Lower leg skin (tissue), 4 donors: ENCODE measurements at regions of chr16 and their contacts with region 1.

Region 1: DNA sequence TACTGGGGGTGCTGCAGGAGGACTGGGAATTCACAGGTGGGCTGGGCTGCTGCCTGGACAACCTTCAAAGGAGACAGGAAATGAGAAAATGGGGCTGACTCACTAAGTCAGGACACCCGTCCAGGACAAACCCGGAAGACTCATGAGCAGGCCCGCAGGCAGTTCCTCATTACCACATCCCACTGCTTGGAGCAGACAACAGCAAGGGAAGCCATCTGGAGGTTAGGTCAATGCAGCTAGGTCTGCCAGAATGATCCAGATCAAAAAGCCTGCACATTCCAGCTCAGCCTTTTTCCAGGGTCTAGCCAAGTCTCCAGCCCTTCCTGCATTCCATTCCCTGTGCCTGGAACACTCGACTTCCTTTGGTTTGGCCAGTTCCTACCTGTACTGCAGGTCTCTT is 536.5 kb upstream of the CDH11 start:
- DNase-seq: peak; percentile 43 to 87
- H3K4me3 ChIP-seq: no peak overlapping the region
- CTCF ChIP-seq: no peak
- POLR2A ChIP-seq: no peak

Region 2: GRCh38 chr16:66270333-66270927 is 612.1 kb after region 1 on chr16:
- intact Hi-C with region 1: loop called (anchors 10 kb)
- DNase-seq: peak in 1 of 2 donors; percentile 91
- H3K4me3 ChIP-seq: no peak overlapping the region
- CTCF ChIP-seq: peak in 1 of 3 donors; percentile 32
- POLR2A ChIP-seq: no peak

Region 3: DNA sequence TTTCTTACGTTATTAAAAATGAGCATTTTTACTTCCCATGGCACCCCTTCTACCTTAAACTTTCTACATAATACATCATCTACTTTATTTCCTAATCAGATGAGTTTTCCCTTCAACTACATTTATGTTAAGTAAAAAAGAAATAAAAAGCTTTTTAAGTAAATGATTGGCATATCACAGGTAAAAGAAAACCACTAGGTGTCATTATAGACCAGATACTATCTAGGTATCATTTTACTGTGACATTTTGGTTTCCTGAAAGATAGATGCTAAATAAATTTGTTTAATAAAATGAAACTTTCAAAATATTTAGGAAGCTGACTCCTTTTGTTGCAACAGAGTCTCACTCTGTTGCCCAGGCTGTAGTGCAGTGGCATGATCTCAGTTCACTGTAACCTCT is 904.1 kb after region 1 on chr16:
- intact Hi-C with region 1: no loop called
- DNase-seq: no peak
- H3K4me3 ChIP-seq: no peak overlapping the region
- CTCF ChIP-seq: no peak
- POLR2A ChIP-seq: no peak